Activated CD4-positive, alpha-beta memory T cell treated with anti-CD3 and anti-CD28 coated beads for 36 hours (primary cell): ENCODE measurements at regions of chr20 and their contacts with region 1.

Region 1: DNA sequence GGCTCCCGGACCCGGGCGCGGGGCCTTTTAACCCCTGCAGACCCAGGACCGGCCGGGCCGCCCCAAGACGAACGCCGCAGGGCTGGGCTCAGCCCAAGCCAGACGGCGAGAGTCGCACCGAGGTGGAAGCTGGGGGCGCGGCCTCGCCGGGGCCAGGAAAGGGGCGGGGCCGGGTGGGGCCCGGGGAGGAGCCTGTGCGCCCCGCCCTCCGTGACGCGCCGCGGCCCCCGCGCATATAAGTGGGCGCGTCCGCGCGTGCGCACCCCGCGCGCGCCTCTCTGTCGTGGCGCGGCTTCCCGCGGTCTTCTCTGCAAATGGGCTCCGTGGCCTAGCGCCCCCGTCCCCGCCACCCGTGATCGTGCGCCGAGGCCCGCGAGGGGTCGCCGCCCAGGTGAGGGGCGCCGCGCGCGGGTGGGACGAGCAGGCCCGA is at the start of gene PPDPF:
- DNase-seq: peak; percentile 87
- H3K4me3 Mint-ChIP-seq: peak within 1 kb of the TSS; percentile 78
- H3K27ac Mint-ChIP-seq: peak within 1 kb of the TSS; percentile 79
- H3K4me1 Mint-ChIP-seq: peaks cover 23% of the 10 kb centered on the region
- H3K27me3 Mint-ChIP-seq: no peaks in the 10 kb centered on the region
- total RNA-seq, gene PPDPF: 191 to 201 TPM

Region 2: GRCh38 chr20:63475206-63475605 is 45.3 kb before region 1 on chr20:
- CTCF ChIA-PET with region 1: no interaction called
- POLR2A ChIA-PET with region 1: no interaction called
- intact Hi-C with region 1: no loop called
- DNase-seq: peak; percentile 22
- H3K4me3 Mint-ChIP-seq: no peak overlapping the region
- H3K27ac Mint-ChIP-seq: no peak overlapping the region
- H3K4me1 Mint-ChIP-seq: peaks cover 5% of the 10 kb centered on the region
- H3K27me3 Mint-ChIP-seq: peaks cover 45% of the 10 kb centered on the region

Region 3: GRCh38 chr20:63495741-63496595 is 24.6 kb before region 1 on chr20:
- CTCF ChIA-PET with region 1: interaction called, 14 read pairs
- POLR2A ChIA-PET with region 1: interaction called, 3 read pairs
- intact Hi-C with region 1: no loop called
- DNase-seq: peak; percentile 79
- H3K4me3 Mint-ChIP-seq: no peak overlapping the region
- H3K27ac Mint-ChIP-seq: no peak overlapping the region
- H3K4me1 Mint-ChIP-seq: no peaks in the 10 kb centered on the region
- H3K27me3 Mint-ChIP-seq: peaks cover 18% of the 10 kb centered on the region

Region 4: DNA sequence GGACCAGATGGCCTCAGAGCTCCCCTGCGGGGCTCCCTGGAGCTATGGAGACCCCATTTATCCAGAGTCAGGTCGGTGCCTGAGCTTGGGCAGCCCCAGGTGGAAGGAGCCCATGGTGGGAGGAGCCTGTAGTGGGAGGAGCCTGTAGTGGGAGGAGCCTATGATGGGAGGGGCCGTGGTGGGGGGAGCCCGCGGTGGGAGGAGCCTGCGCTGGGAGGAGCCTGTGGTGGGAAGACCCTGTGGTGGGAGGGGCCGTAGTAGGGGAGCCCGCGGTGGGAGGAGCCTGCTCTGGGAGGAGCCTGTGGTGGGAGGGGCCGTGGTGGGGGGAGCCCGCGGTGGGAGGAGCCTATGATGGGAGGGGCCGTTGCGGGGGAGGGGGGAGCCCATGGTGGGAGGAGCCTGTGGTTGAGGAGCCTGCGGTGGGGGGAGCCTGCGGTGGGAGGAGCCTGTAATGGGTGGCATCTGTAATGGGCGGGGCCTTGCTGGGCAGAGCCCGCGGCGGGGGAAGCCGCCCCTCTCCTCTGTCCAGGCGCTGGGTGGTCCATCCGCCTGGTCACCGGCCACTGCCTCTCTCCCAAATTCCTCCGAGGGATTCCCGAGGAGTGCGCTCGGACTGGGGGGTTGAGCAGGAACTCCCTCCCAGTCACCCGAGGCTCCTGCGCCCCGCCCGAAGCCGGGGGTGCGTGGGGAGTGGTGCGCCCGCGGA is 32.9 kb after region 1 on chr20:
- CTCF ChIA-PET with region 1: no interaction called
- POLR2A ChIA-PET with region 1: interaction called, 4 read pairs
- intact Hi-C with region 1: loop called (anchors 2 kb)
- DNase-seq: peak; percentile 94
- H3K4me3 Mint-ChIP-seq: peak overlapping the region; percentile 39
- H3K27ac Mint-ChIP-seq: no peak overlapping the region
- H3K4me1 Mint-ChIP-seq: peaks cover 11% of the 10 kb centered on the region
- H3K27me3 Mint-ChIP-seq: peaks cover 6% of the 10 kb centered on the region

Region 5: GRCh38 chr20:63791497-63792156 is 271.1 kb after region 1 on chr20:
- CTCF ChIA-PET with region 1: no interaction called
- POLR2A ChIA-PET with region 1: no interaction called
- intact Hi-C with region 1: no loop called
- DNase-seq: no peak
- H3K4me3 Mint-ChIP-seq: no peak overlapping the region
- H3K27ac Mint-ChIP-seq: no peak overlapping the region
- H3K4me1 Mint-ChIP-seq: peaks cover 3% of the 10 kb centered on the region
- H3K27me3 Mint-ChIP-seq: peaks cover 10% of the 10 kb centered on the region